ENCODE measurements at regions of chr5 and their contacts with region 1.

Region 1: DNA sequence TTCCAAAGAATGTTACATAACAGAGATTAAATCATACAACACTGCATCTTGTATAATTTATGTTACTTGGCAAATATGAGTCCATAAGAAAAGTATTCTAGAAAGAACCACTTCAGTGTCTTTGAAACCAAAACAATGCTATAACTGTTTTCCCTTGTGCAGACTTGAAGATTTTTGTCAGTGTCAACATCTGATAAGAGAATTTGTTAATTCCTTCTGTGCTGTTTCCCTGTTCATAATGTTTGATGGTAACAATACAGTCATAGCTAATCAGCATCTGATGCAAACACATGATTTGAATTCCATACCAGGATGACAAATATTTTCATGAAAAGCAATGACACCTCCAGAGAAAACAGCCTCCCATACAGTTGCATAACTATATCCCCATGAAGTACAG is 306.8 kb downstream of the SEMA5A start:
- DNase-seq: peak; percentile 32
- ATAC-seq: peak; percentile 51
- H3K4me3 ChIP-seq: no peak overlapping the region
- H3K27ac ChIP-seq: no peak overlapping the region
- H3K4me1 ChIP-seq: peaks cover 1% of the 10 kb centered on the region
- H3K27me3 ChIP-seq: no peaks in the 10 kb centered on the region
- CTCF ChIP-seq: no peak
- POLR2A ChIP-seq: no peak
- RAD21 ChIP-seq: no peak

Region 2: GRCh38 chr5:9313734-9314133 is 74.7 kb after region 1 on chr5:
- CTCF ChIA-PET with region 1: no interaction called
- POLR2A ChIA-PET with region 1: no interaction called
- dilution Hi-C with region 1: no loop called
- in situ Hi-C with region 1: no loop called
- intact Hi-C with region 1: loop called (anchors 2 kb)
- DNase-seq: no peak
- ATAC-seq: no peak
- H3K4me3 ChIP-seq: no peak overlapping the region
- H3K27ac ChIP-seq: no peak overlapping the region
- H3K4me1 ChIP-seq: no peaks in the 10 kb centered on the region
- H3K27me3 ChIP-seq: no peaks in the 10 kb centered on the region
- CTCF ChIP-seq: no peak
- POLR2A ChIP-seq: no peak
- RAD21 ChIP-seq: no peak

Measured in IMR-90 (cell line).